Aorta (tissue), 5 donors: ENCODE measurements at regions of chr14 and their contacts with region 1.

Region 1: DNA sequence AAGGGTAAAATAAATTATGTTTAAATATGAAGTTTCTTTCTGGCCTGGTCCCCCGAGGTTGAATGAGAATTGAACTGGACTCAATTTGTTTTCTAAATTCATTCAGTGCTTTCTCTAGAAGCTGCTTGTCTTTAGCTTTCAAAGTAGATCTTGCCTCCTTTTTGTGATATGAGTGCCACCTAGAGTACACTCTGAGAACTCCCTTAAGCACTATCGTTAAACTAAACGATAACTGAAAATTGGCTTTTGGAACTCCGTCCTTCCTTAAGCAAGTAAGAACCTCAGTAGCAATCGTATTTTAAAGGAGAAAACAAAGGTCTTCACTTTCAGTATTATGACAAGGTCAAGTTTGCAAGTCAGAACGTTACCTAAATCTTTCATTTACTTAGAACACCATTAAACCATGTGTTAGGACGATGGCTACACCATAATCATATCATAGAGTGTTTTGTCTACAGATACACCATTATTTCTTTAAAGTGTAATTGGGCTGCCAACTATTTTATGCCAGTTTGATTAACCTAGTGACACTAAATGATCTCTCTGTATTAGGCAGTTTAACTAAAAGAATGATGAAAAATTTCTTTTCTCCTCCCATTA is 364.8 kb downstream of the SNAPC1 start:
- DNase-seq: no peak
- ATAC-seq: no peak
- H3K4me3 ChIP-seq: no peak overlapping the region
- H3K27ac ChIP-seq: no peak overlapping the region
- H3K4me1 ChIP-seq: no peaks in the 10 kb centered on the region
- H3K27me3 ChIP-seq: no peaks in the 10 kb centered on the region

Region 2: DNA sequence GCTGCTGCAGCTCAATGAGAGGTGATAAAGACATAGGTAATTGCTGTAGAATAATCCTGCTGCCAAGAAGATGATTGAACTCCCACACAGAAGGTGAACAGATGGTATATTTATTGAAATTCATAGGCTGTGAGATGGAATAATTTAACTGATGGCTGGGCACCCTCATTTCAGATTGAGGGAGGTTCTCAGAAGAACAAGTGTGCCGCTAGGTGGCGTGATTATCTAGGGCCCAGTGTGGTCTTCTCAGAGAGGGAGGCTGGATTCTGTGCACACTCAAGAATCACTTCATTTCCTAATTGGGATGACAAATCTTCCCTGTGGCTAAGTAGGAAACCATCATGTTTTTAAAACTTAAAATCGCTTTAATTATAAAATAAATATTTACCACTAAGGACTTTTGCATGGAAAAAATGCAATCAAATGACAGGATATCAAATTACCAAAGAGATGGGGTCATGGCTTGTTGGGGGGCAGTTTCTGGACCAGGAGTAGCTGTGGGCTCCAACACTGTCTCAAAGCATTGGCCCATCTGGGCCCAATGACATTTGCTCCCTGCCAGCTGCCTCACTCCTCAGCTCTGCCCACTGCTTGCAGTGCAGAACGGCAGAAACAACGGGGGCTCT is 232.4 kb before region 1 on chr14:
- intact Hi-C with region 1: loop called in 1 of 2 experiments (anchors 5 kb)
- DNase-seq: peak in 1 of 2 donors; percentile 67
- ATAC-seq: no peak
- H3K4me3 ChIP-seq: no peak overlapping the region
- H3K27ac ChIP-seq: no peak overlapping the region
- H3K4me1 ChIP-seq: no peaks in the 10 kb centered on the region
- H3K27me3 ChIP-seq: no peaks in the 10 kb centered on the region

Region 3: GRCh38 chr14:62084020-62084419 is 43.0 kb before region 1 on chr14:
- intact Hi-C with region 1: no loop called
- DNase-seq: no peak
- ATAC-seq: no peak
- H3K4me3 ChIP-seq: no peak overlapping the region
- H3K27ac ChIP-seq: no peak overlapping the region
- H3K4me1 ChIP-seq: no peaks in the 10 kb centered on the region
- H3K27me3 ChIP-seq: no peaks in the 10 kb centered on the region